ENCODE measurements at regions of chr13 and their contacts with region 1.

Region 1: DNA sequence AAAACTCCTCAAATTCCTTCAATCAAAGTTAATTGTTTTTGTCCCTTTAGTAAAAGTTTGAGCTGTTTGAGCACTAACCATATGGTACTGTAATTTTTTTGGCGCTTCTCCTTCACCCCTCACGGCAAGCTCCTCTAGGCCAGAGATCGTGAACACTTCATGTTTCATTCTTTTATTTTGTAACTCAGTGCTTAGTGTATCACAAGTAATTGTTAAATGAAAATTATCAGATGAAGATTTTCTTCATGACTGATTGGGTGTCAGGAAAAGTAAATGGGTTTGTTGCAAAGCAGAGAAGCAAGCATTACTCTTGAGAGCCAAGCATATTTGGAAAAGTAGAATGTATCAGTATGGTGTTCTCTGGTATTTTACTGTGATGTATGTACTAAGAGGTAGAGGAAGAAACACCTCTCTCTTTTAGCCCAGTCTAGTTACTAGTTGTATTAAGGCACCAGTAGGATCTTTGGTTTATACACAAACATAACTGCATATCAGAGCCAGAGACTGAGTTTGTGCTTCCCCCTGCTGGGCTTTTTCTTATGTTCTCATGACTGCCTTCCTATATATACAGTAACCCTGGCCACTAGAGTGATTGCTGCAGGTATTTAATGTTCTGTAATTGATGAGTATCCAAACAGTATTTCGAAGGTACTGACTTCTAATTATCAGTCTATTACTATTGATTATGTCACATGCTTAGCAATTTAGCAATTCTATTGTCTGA is 202.3 kb upstream of the KLHL1 start:
- DNase-seq: peak; percentile 47
- H3K4me3 ChIP-seq: no peak overlapping the region
- H3K27ac ChIP-seq: no peak overlapping the region
- H3K4me1 ChIP-seq: no peaks in the 10 kb centered on the region
- H3K27me3 ChIP-seq: no peaks in the 10 kb centered on the region
- CTCF ChIP-seq: peak; percentile 48

Region 2: DNA sequence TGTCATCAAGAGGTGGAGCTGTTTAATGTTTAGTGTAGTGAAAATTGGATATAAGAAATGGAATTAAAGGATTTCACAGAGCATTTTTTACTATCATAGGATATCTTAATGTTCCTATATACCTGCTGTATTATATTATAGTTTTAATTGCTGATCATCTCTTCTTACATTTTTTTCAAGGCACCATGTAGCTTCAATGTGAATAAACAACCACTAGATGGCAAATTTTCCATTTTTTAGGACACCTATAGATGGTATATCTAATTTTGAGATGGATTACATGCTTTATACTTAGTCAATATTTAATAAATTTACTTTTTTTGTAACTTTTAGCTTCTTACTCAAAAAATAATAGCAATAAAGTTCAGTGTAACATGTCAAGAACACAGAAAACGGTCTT is 211.9 kb before region 1 on chr13:
- CTCF ChIA-PET with region 1: no interaction called
- POLR2A ChIA-PET with region 1: no interaction called
- intact Hi-C with region 1: loop called (anchors 5 kb)
- DNase-seq: peak; percentile 4
- H3K4me3 ChIP-seq: no peak overlapping the region
- H3K27ac ChIP-seq: no peak overlapping the region
- H3K4me1 ChIP-seq: no peaks in the 10 kb centered on the region
- H3K27me3 ChIP-seq: no peaks in the 10 kb centered on the region
- CTCF ChIP-seq: peak; percentile 46; the same call in 1 of the 2 replicates

Measured in A673 (cell line).